ENCODE measurements at regions of chr9 and their contacts with region 1.

Region 1: GRCh38 chr9:135474915-135475314 is 4.7 kb upstream of the PPP1R26 start:
- DNase-seq: no peak
- H3K4me3 ChIP-seq: no peak overlapping the region
- H3K27ac ChIP-seq: no peak overlapping the region
- H3K4me1 ChIP-seq: peaks cover 0 to 12% of the 10 kb centered on the region in 2 donors
- H3K27me3 ChIP-seq: no peaks in the 10 kb centered on the region
- CTCF ChIP-seq: no peak
- POLR2A ChIP-seq: no peak

Region 2: GRCh38 chr9:135255033-135255840 is 219.7 kb before region 1 on chr9:
- intact Hi-C with region 1: no loop called
- DNase-seq: no peak
- H3K4me3 ChIP-seq: no peak overlapping the region
- H3K27ac ChIP-seq: no peak overlapping the region
- H3K4me1 ChIP-seq: no peaks in the 10 kb centered on the region
- H3K27me3 ChIP-seq: no peaks in the 10 kb centered on the region
- CTCF ChIP-seq: no peak
- POLR2A ChIP-seq: no peak

Region 3: DNA sequence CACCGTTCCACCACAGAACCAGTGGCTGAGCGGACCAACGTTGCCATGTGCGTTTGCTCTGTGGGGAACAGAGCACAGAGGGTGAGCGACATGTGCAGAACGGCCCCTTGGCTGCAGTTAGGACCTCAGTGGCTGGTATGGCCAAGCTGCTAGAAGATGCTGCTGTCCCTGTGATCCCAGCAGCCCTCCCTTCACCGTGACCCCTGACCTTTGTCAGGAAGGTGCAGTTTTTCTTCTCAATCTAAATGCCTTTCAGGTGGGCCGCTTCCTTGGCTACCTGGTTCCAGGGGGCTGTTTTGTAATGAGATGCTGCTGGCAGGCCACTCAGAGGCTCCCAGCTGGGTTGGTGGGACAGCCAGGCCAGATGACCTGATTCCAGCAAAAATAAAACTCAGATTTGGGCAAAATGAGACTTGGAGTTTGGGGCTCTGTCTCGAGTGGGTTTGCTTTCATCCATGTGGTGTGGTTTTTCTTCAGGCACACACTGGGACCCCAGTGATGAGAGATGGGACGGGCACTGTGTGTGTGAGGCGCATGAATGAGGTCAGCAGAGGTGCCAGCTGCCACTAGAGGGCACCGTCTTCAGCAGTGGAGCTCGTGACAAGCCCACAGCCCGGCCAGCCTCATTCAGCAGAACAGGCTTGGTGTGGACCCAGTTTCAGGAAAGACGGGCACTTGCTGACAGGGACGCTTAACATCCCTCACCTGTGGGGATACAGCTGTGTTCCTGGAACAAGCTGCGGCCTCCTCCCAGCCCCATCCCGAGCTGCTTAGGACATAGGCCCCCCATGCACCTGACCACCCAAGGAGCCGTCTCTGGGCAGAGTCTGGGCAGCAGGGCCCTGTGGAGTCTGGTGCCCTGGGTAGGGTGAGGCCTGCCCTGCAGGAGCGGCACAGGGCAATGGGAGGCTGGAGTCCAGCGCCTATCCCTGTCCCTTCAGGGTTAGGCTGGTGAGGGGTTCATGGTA is 29.6 kb after region 1 on chr9:
- intact Hi-C with region 1: loop called in 1 of 2 experiments (anchors 5 kb)
- DNase-seq: peak; percentile 66 to 86 (median 77)
- H3K4me3 ChIP-seq: no peak overlapping the region
- H3K27ac ChIP-seq: no peak overlapping the region
- H3K4me1 ChIP-seq: peaks cover 10% of the 10 kb centered on the region in 2 donors
- H3K27me3 ChIP-seq: no peaks in the 10 kb centered on the region
- CTCF ChIP-seq: peak; percentile 52 to 67 (median 60)
- POLR2A ChIP-seq: no peak

Measured in adrenal gland (tissue), 19 donors.